K562 (cell line): ENCODE measurements at regions of chr1 and their contacts with region 1.

Region 1: DNA sequence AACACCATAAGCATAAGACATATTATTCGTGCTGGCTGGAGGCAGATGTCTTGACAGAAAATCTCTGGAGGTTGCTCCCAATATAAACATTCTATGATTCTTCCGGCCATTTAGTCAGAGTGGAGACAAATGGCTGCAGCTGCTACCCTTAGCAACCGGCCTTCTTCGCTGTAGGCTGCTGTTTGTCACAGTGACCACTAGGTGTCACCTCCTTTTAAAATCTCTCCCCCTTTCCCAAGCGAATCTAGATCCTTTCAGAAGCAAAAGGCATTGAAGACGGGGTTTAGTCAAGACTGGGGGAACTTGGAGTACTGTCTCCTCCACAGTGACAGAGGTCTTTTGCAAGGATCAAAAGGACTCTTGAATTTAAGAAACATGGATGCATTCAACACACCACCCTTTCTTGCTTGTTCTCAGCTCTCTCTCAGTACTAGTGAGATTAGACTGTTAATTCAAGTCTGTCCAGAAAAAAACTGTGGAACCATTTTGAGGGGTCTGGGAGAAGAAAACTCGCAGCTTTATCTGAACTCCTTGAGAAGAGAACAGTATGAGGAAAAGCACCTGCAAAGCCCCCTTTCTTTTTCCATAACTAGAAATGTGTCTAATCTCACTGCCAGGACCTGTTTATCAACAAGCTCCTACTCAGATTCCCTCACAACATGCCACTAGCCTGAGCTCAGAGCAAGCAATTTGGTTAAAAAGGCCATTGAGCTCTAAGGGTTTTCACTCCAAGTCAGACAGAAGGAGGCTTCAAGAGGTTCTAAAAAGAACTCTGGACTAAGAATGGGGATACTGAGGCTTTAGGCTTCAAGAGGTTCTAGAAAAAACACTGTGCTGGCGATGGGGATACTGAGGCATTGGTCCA is 408.3 kb upstream of the PLXNA2 start:
- DNase-seq: peak; percentile 51 to 70 (median 59)
- ATAC-seq: peak; percentile 98
- H3K4me3 ChIP-seq: no peak overlapping the region
- H3K27ac ChIP-seq: no peak overlapping the region
- H3K4me1 ChIP-seq: no peaks in the 10 kb centered on the region
- H3K27me3 ChIP-seq: no peaks in the 10 kb centered on the region
- CTCF ChIP-seq: peak; percentile 61 to 82 (median 77)
- EP300 ChIP-seq: no peak
- POLR2A ChIP-seq: no peak
- RAD21 ChIP-seq: peak; percentile 40 to 66; a peak in 3 of 4 replicates

Region 2: DNA sequence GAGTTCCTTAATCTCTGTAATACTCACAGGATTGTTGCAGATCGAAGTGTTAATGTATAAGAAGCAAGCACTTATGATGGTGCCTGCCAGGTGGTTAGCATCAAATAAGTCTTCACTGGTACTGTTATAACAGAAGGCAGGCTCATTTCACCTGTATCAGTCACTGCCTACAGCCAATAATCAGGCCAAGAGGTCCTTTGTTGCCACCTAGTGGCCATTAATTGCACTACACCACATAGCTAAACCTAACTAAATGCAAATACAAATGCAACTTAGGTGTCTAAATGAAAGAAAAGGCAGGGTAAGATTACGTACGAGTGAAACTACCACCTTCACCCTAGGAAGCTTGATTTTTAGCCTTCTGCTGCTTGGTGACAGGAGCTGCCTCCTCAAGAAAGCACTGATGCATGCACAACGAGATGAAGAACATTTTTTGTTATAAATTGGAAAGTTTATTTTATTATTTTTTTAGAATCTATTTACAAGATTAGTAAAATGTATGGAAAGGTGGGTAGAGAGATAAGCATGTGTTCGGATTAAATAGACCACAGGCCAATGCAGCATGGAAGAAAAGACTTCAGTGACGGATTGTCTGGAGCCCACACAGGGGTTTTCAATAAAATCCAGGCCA is 596.2 kb after region 1 on chr1:
- CTCF ChIA-PET with region 1: no interaction called
- POLR2A ChIA-PET with region 1: no interaction called
- in situ Hi-C with region 1: no loop called
- intact Hi-C with region 1: loop called (anchors 2 kb)
- DNase-seq: peak; percentile 68 to 73 (median 70)
- ATAC-seq: peak; percentile 93
- H3K4me3 ChIP-seq: no peak overlapping the region
- H3K27ac ChIP-seq: no peak overlapping the region
- H3K4me1 ChIP-seq: no peaks in the 10 kb centered on the region
- H3K27me3 ChIP-seq: no peaks in the 10 kb centered on the region
- CTCF ChIP-seq: peak; percentile 68 to 90 (median 85)
- EP300 ChIP-seq: no peak
- POLR2A ChIP-seq: no peak
- RAD21 ChIP-seq: peak; percentile 67 to 83

Region 3: DNA sequence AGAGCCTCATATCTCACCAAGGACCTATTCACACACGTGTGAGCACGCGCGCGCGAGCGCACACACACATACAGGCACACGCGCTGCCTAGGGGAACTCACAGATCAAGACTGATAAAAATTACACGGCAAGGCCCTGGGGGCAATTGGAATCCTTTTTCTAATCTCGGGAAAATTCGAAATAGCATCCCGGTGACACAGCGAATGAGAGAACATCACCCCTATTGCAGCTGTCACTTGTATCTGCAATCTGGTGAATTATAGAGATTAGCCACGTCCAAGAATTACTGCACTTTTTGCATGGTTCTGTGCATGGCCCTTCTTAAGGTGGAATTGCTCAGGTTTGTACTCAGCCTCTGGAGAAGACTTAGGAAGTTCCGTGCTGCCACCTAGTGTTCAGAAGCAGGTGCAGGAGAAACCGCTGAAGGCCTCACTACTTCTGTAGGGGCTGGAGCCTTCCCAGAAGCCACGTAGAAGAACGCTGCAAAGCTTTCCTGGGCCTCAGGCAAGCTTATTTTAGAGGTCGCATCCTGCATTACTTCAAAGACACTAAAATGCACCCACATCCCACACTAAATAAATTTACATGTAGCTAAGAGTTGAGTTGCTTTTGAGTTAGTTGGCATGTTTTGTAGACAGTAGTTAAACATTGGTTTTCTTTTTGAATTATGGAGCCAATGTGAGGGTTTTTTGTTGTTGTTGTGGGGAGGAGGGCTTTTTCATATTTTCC is 701.7 kb after region 1 on chr1:
- CTCF ChIA-PET with region 1: no interaction called
- POLR2A ChIA-PET with region 1: no interaction called
- in situ Hi-C with region 1: no loop called
- intact Hi-C with region 1: loop called (anchors 1 kb)
- DNase-seq: peak; percentile 71 to 85 (median 72)
- ATAC-seq: peak; percentile 100
- H3K4me3 ChIP-seq: no peak overlapping the region
- H3K27ac ChIP-seq: no peak overlapping the region
- H3K4me1 ChIP-seq: no peaks in the 10 kb centered on the region
- H3K27me3 ChIP-seq: no peaks in the 10 kb centered on the region
- CTCF ChIP-seq: peak; percentile 82 to 90 (median 88)
- EP300 ChIP-seq: no peak
- POLR2A ChIP-seq: no peak
- RAD21 ChIP-seq: peak; percentile 51 to 75

Region 4: DNA sequence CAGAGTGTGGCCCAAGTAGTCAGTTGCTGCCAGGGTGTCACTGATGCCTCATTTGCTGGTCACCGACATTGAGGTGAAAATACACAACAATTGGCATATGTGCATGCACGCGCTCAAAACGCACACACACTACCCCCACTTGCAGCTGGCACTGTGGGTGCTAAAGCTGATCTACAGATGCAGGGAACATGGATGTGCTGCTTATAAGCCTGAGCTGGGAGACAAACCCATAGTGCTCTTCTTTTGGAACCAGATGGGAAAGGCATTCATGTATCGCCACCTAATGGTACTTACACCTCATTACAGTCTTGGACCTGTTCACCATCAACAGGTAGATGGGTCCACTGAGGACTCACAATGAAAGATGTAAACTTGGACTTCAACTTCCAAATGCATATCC is 860.7 kb after region 1 on chr1:
- CTCF ChIA-PET with region 1: no interaction called
- POLR2A ChIA-PET with region 1: no interaction called
- in situ Hi-C with region 1: no loop called
- intact Hi-C with region 1: loop called (anchors 2 kb)
- DNase-seq: peak; percentile 32 to 60 (median 42)
- ATAC-seq: peak; percentile 94
- H3K4me3 ChIP-seq: no peak overlapping the region
- H3K27ac ChIP-seq: no peak overlapping the region
- H3K4me1 ChIP-seq: no peaks in the 10 kb centered on the region
- H3K27me3 ChIP-seq: peaks cover 2 to 5% of the 10 kb centered on the region in 2 experiments; a peak in 1 of 5 replicates
- CTCF ChIP-seq: peak; percentile 65 to 79 (median 78)
- EP300 ChIP-seq: no peak
- POLR2A ChIP-seq: no peak
- RAD21 ChIP-seq: peak in 1 of 2 experiments; percentile 67; a peak in 2 of 4 replicates

Region 5: GRCh38 chr1:209565759-209566678 is 913.5 kb after region 1 on chr1:
- CTCF ChIA-PET with region 1: interaction called, 6 read pairs
- POLR2A ChIA-PET with region 1: no interaction called
- in situ Hi-C with region 1: no loop called
- intact Hi-C with region 1: loop called (anchors 1 kb)
- DNase-seq: peak; percentile 72 to 86 (median 74)
- ATAC-seq: peak; percentile 97
- H3K4me3 ChIP-seq: no peak overlapping the region
- H3K27ac ChIP-seq: no peak overlapping the region
- H3K4me1 ChIP-seq: no peaks in the 10 kb centered on the region
- H3K27me3 ChIP-seq: peaks cover 4 to 18% of the 10 kb centered on the region in 2 experiments; a peak in 3 of 5 replicates
- CTCF ChIP-seq: peak; percentile 75 to 88 (median 87)
- EP300 ChIP-seq: no peak
- POLR2A ChIP-seq: no peak
- RAD21 ChIP-seq: peak; percentile 58 to 76